ENCODE measurements at regions of chr1 and their contacts with region 1.

Region 1: GRCh38 chr1:167090314-167090942 is at the start of gene GPA33:
- DNase-seq: peak; percentile 61
- H3K4me3 Mint-ChIP-seq: peak within 1 kb of the TSS; percentile 21
- H3K27ac Mint-ChIP-seq: peak within 1 kb of the TSS; percentile 88
- H3K4me1 Mint-ChIP-seq: peaks cover 50% of the 10 kb centered on the region
- H3K27me3 Mint-ChIP-seq: no peaks in the 10 kb centered on the region
- total RNA-seq, gene GPA33: 1.2 to 1.4 TPM

Region 2: GRCh38 chr1:166785987-166786386 is 304.4 kb before region 1 on chr1:
- CTCF ChIA-PET with region 1: no interaction called
- intact Hi-C with region 1: no loop called
- DNase-seq: no peak
- H3K4me3 Mint-ChIP-seq: no peak overlapping the region
- H3K27ac Mint-ChIP-seq: no peak overlapping the region
- H3K4me1 Mint-ChIP-seq: no peaks in the 10 kb centered on the region
- H3K27me3 Mint-ChIP-seq: peaks cover 19% of the 10 kb centered on the region

Region 3: DNA sequence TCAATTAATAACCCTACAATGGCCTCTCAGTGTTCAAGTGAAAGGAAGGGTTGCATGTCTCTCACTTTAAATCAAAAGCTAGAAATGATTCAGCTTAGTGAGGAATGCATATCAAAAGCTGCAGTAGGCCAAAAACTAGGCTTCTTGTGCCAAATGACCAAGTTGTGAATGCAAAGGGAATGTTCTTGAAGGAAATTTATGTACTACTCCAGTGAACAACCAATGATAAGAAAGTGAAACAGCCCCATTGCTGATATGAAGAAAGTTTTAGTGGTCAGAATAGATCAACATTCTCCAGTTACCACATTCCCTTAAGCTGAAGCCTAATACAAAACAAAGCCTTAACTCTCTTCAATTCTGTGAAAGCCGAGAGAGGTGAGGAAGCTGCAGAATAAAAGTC is 91.3 kb before region 1 on chr1:
- CTCF ChIA-PET with region 1: no interaction called
- intact Hi-C with region 1: no loop called
- DNase-seq: no peak
- H3K4me3 Mint-ChIP-seq: no peak overlapping the region
- H3K27ac Mint-ChIP-seq: no peak overlapping the region
- H3K4me1 Mint-ChIP-seq: peaks cover 9% of the 10 kb centered on the region
- H3K27me3 Mint-ChIP-seq: no peaks in the 10 kb centered on the region

Region 4: DNA sequence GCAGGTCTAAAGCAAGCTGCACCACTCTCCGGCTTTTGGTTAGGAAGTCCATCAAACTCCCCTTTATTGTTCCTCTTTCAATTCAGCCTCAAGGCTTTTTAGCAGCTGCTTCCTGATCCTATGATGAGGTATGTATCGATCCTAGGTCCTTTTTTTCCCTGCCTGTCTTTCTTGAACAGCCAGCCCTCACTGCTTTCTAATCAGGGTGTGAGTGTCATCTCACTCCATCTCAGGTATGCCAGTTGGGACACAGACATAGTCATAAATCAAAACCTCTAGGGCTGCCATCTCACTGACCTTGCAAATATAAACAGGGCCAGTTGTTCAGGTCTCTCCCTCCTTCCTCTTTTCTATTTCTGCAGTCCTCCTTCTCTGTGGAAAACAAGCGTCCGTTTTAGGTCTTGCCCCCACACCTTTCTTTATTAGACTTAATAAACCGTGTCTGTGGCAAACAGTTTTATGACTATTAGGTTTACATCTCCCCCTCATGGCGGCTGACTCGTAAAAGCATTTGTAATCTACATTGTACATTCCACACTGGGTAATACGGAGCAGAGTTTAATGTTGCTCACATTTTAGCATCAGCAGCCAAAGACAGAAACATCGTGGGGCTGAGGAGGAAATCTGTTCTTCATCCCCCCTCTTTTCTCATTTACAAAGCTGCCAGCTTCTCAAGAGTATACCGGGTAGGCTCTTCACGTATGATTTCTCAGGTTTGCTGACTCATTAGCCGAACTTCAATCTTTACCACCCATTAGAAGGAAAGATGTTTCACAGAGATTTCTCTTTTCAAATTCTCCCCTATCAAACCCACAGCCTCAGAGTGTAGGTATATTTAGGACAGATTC is 15.1 kb after region 1 on chr1:
- CTCF ChIA-PET with region 1: interaction called, 8 read pairs
- intact Hi-C with region 1: loop called (anchors 1 kb)
- DNase-seq: no peak
- H3K4me3 Mint-ChIP-seq: no peak overlapping the region
- H3K27ac Mint-ChIP-seq: peak overlapping the region; percentile 42
- H3K4me1 Mint-ChIP-seq: peaks cover 56% of the 10 kb centered on the region
- H3K27me3 Mint-ChIP-seq: no peaks in the 10 kb centered on the region

Region 5: GRCh38 chr1:167121375-167122120 is 31.1 kb after region 1 on chr1:
- CTCF ChIA-PET with region 1: interaction called, 6 read pairs
- intact Hi-C with region 1: loop called (anchors 2 kb)
- DNase-seq: peak; percentile 58
- H3K4me3 Mint-ChIP-seq: peak overlapping the region; percentile 81
- H3K27ac Mint-ChIP-seq: no peak overlapping the region
- H3K4me1 Mint-ChIP-seq: peaks cover 3% of the 10 kb centered on the region
- H3K27me3 Mint-ChIP-seq: peaks cover 2% of the 10 kb centered on the region